ENCODE measurements at regions of chr9 and their contacts with region 1.

Region 1: GRCh38 chr9:113221003-113221799 is at the starts of genes FKBP15 and SLC31A1:
- DNase-seq: peak; percentile 94
- ATAC-seq: peak; percentile 95
- H3K4me3 Mint-ChIP-seq: peak within 1 kb of the TSS; percentile 96
- H3K27ac Mint-ChIP-seq: peak within 1 kb of the TSS; percentile 94
- H3K4me1 Mint-ChIP-seq: peaks cover 49% of the 10 kb centered on the region
- H3K27me3 Mint-ChIP-seq: no peaks in the 10 kb centered on the region
- CTCF ChIP-seq: no peak
- total RNA-seq, gene FKBP15: 48.3 and 49.1 TPM in 2 replicates
- total RNA-seq, gene SLC31A1: 5.7 and 7.3 TPM in 2 replicates

Region 2: DNA sequence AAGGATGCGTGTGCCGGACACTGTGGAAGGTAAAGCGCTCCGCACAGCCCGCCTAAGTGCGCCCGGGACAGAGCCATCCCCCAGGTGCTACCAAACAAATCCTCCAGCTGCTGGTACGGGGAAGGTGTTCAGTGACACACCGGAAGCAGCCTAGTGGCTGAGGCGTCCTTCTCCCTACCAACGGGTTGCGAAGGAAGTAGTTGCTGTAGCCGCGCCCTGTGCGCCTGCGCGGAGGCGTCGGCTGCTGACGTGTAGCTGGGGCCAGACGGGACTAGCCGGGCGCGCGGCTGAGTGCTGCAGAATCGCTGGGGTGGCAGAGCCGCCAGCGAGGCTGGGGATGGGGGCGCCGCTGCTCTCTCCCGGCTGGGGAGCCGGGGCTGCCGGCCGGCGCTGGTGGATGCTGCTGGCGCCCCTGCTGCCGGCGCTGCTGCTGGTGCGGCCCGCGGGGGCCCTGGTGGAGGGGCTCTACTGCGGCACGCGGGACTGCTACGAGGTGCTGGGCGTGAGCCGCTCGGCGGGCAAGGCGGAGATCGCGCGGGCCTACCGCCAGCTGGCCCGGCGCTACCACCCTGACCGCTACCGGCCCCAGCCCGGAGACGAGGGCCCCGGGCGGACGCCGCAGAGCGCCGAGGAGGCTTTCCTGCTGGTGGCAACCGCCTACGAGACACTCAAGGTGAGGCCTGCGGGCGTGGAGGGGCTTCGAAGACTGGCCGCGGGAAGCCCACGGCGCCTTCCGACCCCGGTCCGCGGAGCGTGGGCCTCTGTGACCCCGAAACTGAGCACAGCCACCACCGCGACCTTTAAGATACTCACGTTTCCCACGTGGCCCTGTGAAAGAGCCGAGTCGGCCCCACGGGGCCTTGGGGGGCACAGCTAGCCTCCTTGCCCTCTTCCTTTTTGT is 1589.9 kb before region 1 on chr9 and contains the start of gene DNAJC25:
- CTCF ChIA-PET with region 1: no interaction called
- POLR2A ChIA-PET with region 1: no interaction called
- intact Hi-C with region 1: loop called (anchors 1 kb)
- DNase-seq: peak; percentile 91
- ATAC-seq: peak; percentile 94
- H3K4me3 Mint-ChIP-seq: peak within 1 kb of the TSS; percentile 95
- H3K27ac Mint-ChIP-seq: peak within 1 kb of the TSS; percentile 89
- H3K4me1 Mint-ChIP-seq: peaks cover 29% of the 10 kb centered on the region
- H3K27me3 Mint-ChIP-seq: no peaks in the 10 kb centered on the region
- CTCF ChIP-seq: no peak
- total RNA-seq, gene DNAJC25: 3.5 and 4.3 TPM in 2 replicates

Region 3: GRCh38 chr9:113150670-113151611 is 70.3 kb before region 1 on chr9 and contains the start of gene SLC31A2:
- CTCF ChIA-PET with region 1: no interaction called
- POLR2A ChIA-PET with region 1: interaction called, 4 read pairs
- intact Hi-C with region 1: loop called (anchors 1 kb)
- DNase-seq: peak; percentile 80
- ATAC-seq: peak; percentile 94
- H3K4me3 Mint-ChIP-seq: peak within 1 kb of the TSS; percentile 84
- H3K27ac Mint-ChIP-seq: no peak within 1 kb of the TSS
- H3K4me1 Mint-ChIP-seq: peaks cover 13% of the 10 kb centered on the region
- H3K27me3 Mint-ChIP-seq: peaks cover 2% of the 10 kb centered on the region
- CTCF ChIP-seq: no peak
- total RNA-seq, gene SLC31A2: 0.93 and 1.1 TPM in 2 replicates

Region 4: GRCh38 chr9:113238859-113239232 is 17.6 kb after region 1 on chr9:
- CTCF ChIA-PET with region 1: no interaction called
- POLR2A ChIA-PET with region 1: interaction called, 4 read pairs
- intact Hi-C with region 1: loop called (anchors 2 kb)
- DNase-seq: no peak
- ATAC-seq: no peak
- H3K4me3 Mint-ChIP-seq: no peak overlapping the region
- H3K27ac Mint-ChIP-seq: no peak overlapping the region
- H3K4me1 Mint-ChIP-seq: peaks cover 12% of the 10 kb centered on the region
- H3K27me3 Mint-ChIP-seq: no peaks in the 10 kb centered on the region
- CTCF ChIP-seq: no peak

Region 5: DNA sequence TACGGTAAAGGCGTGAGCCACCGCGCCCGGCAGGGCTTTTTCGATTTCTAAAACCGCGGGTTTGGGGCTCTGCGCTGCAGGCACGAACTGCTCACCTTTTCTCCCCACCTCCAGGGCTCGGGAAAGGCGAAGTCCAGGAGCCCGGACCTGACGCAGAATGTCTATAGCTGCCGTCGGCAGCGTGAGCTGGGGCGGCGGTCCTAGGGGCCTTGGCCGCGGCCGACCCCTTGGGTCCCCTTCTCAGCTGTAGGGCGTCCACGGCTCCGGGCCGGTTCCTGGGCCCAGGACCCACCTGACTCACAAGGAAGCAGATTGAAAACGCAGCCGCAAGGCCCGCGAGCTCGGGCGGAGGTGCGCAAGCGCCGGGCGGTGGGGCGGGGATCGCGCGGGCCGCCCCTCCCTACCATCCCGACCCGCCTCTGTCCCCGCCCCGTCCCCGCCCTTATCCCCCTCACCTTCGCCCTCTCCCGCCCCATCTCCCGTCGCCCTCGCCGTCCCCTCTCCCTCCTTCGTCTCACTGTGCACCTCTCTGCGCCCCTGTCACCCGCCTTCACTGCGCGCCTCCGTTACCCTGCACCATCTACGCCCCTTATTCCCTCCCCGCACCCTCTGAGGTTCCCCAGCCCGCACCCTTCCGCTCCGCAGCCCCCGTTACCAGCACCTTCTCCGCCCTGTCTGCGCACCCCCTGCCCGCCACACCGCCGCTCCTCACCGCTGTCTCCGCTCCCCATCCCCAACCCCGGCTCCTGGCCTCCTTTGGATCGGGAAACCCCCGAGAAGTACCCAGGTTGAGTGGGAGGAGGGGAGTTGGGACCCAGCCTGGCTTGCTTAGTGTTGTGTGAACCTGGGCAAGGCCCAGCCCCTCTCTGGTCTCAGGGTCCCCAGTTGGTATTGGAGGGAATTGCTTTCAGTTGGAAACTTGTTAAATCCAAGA is 155.7 kb after region 1 on chr9 and contains the start of gene HDHD3:
- CTCF ChIA-PET with region 1: no interaction called
- POLR2A ChIA-PET with region 1: interaction called, 5 read pairs
- intact Hi-C with region 1: loop called (anchors 1 kb)
- DNase-seq: peak; percentile 78
- ATAC-seq: peak; percentile 90
- H3K4me3 Mint-ChIP-seq: peak within 1 kb of the TSS; percentile 92
- H3K27ac Mint-ChIP-seq: peak within 1 kb of the TSS; percentile 81
- H3K4me1 Mint-ChIP-seq: peaks cover 32% of the 10 kb centered on the region
- H3K27me3 Mint-ChIP-seq: no peaks in the 10 kb centered on the region
- CTCF ChIP-seq: no peak
- total RNA-seq, gene HDHD3: 23.4 and 23.9 TPM in 2 replicates

Region 6: DNA sequence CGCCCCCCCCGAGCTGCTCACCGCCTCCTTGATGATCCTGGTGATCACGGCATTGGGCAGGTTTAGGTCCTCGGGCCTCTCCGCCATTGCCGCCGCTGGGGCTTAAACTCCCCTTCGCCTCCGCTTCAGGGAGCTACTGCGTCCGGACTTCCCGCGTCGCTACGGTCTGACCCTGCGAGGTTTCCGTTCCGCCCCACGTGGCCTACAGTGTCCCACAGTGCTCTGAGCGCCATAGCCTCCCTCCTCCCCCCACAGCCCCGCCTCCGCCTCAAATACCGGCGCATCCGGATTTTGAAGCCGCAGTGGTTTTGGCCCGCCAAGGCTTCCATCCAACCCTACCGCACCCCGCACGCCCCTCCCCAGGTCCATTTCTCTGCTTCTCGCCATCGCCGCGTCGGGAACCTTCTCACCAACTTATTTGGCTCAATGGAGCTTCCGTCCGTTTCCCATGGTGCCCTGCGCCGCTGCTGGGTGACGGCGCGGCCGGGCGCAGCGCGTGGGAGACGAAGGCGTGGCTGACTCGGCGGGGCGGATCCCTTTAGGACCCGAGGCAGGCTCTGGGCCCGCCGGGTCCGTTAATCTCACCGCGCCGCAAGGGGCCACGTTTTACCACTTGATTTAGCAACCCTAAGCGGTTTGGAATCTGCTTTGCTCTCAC is 189.1 kb after region 1 on chr9 and contains the starts of genes C9orf43 and POLE3:
- CTCF ChIA-PET with region 1: no interaction called
- POLR2A ChIA-PET with region 1: interaction called, 25 read pairs
- intact Hi-C with region 1: loop called (anchors 1 kb)
- DNase-seq: peak; percentile 94
- ATAC-seq: peak; percentile 89
- H3K4me3 Mint-ChIP-seq: peak within 1 kb of the TSS; percentile 98
- H3K27ac Mint-ChIP-seq: peak within 1 kb of the TSS; percentile 99
- H3K4me1 Mint-ChIP-seq: peaks cover 31% of the 10 kb centered on the region
- H3K27me3 Mint-ChIP-seq: no peaks in the 10 kb centered on the region
- CTCF ChIP-seq: no peak
- total RNA-seq, gene C9orf43: 0.76 and 1.2 TPM in 2 replicates
- total RNA-seq, gene POLE3: 48.0 and 55.5 TPM in 2 replicates

Region 7: GRCh38 chr9:113929634-113930389 is 708.6 kb after region 1 on chr9:
- CTCF ChIA-PET with region 1: no interaction called
- POLR2A ChIA-PET with region 1: no interaction called
- intact Hi-C with region 1: no loop called
- DNase-seq: no peak
- ATAC-seq: no peak
- H3K4me3 Mint-ChIP-seq: no peak overlapping the region
- H3K27ac Mint-ChIP-seq: no peak overlapping the region
- H3K4me1 Mint-ChIP-seq: no peaks in the 10 kb centered on the region
- H3K27me3 Mint-ChIP-seq: peaks cover 1% of the 10 kb centered on the region
- CTCF ChIP-seq: no peak